Left ventricle myocardium superior (tissue), 1 donor: ENCODE measurements at regions of chr6 and their contacts with region 1.

Region 1: GRCh38 chr6:105087571-105088211 is 92.1 kb downstream of the POPDC3 start:
- DNase-seq: no peak
- ATAC-seq: peak; percentile 64

Region 2: DNA sequence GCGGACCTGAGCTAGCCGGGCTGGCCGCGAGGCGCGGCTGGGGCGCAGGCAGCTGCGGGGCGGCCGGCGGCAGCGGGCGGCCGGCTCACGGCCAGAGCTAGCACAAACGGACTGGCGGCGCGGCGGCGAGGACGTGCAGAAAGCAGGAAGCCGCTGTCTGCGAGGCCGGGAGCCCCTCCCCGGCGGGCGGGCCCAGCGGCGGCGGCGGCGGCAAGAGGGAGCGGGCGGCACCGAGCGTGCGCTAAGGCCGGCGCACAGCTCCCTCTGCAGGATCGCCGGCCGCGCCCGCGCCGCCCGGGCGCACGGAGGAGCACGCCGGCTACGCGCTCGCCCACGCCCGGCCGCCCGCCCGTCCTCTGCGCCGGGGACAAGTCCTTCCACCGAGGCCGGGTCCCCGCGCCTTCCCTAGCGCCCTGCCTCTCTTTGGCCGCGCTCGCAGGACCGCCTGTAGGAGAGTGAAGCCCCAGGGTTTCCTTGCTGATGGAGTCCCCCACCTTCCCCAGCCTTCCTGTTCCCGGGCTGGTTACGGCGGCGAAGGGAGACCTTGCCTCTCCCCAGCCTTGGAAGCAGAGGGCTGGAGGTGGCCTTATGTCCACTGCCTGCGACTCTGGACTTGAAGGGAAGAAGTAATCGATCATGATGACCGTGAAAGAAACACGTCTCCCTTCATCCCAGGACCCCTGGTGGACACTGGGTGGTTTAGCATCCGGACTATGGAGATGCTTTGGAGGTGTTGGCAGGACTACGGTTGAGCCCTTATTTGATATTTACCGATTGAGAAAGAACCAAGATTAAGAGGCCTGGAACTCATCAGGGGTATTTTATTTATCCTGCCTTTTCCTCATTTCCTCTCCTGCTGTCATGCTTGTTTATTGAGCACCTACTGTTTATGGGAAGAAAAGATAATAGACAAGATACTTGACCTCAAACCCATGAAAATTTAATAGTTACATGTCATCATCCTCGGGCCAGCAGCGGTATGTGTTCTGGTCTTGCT is 315.5 kb after region 1 on chr6 and contains the start of gene PREP:
- intact Hi-C with region 1: loop called (anchors 5 kb)
- DNase-seq: peak; percentile 94
- ATAC-seq: peak; percentile 99
- total RNA-seq, gene PREP: 31.6 TPM

Region 3: DNA sequence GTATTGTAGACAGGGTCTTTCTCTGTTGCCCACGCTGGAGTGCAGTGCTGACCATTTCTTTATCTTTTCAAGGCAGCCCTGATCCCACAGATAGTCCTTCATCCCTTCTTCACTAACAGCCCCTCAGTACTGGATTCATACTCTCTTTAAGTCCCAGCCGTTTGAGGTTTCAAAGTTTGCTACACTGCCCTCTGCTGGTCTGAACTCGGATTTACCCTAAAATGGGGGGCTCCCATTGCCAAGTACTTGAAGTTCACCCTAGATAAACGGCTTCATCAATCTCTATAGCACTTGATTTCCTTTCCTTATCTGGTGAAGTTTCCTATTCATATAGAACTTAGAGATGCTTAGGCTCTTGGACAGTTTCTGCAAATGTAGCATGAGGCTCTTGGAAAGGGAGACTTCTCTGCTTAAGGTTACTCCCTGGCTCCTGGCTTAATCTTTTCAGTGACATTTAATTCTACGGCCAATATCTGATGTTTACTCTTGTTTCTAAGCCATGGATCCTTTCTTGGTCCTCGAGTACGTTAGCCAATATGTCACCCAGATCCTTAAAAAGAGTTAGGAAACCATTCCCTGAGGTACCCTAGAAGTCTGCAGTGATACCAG is 336.6 kb after region 1 on chr6:
- intact Hi-C with region 1: loop called (anchors 5 kb)
- DNase-seq: no peak
- ATAC-seq: peak; percentile 61